ENCODE measurements at regions of chr11 and their contacts with region 1.

Region 1: GRCh38 chr11:34357701-34358257 is at the start of gene ABTB2:
- DNase-seq: peak; percentile 95 to 98 (median 96)
- ATAC-seq: peak; percentile 98
- H3K4me3 ChIP-seq: peak within 1 kb of the TSS; percentile 32
- H3K27ac ChIP-seq: 0 out of 3 replicates have a peak within 1 kb of the TSS, but pooled peaks have one; percentile 22
- H3K4me1 ChIP-seq: peaks cover 9 to 27% of the 10 kb centered on the region in 2 experiments
- H3K27me3 ChIP-seq: peaks cover 17 to 23% of the 10 kb centered on the region in 2 experiments
- CTCF ChIP-seq: no peak
- EP300 ChIP-seq: no peak
- POLR2A ChIP-seq: no peak
- RAD21 ChIP-seq: peak in 1 of 2 experiments; percentile 16; a peak in 1 of 4 replicates
- polyA plus RNA-seq, gene ABTB2: 0.03 TPM in 1 of 2 experiments, not detected in the other

Region 2: DNA sequence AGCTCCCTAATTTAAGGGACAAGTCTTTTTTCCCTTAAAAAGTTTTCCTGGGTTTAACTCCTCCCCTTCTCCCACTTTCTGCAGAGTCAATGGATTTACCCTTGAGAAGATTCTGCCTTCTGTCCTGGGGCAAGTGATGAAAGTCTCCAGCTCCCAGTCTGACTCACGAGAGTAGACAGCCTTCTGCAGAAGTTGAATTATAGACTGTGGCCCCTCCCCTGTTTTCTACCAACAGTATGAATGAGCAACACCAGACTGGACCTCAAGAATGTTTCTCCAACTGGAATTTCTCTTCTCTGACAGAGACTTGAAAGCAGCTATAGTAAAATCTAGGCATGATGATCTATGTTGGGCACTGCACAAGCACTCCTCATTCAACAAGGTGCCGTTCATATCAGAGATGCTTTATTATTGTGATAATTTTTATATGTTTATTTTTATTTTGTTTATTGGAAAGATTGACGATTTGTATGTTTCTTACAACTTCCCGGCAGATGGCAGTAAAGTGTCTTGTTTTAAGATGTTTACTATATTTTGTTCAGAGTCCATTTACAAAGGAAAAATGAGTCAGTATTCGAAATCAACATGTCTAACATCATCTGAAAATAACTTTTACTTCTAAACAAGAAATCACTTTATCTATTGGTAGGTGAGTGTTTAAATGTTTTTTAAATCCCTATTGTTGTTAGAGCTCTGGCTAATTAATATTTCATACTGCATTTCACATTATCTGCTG is 522.5 kb before region 1 on chr11:
- CTCF ChIA-PET with region 1: interaction called, 28 read pairs
- POLR2A ChIA-PET with region 1: no interaction called
- in situ Hi-C with region 1: no loop called
- intact Hi-C with region 1: no loop called
- DNase-seq: peak in 2 of 4 experiments; percentile 33 to 74
- ATAC-seq: peak; percentile 78
- H3K4me3 ChIP-seq: no peak overlapping the region
- H3K27ac ChIP-seq: no peak overlapping the region
- H3K4me1 ChIP-seq: no peaks in the 10 kb centered on the region; a peak in 1 of 5 replicates
- H3K27me3 ChIP-seq: peaks cover 10 to 25% of the 10 kb centered on the region in 2 experiments
- CTCF ChIP-seq: peak; percentile 34 to 71 (median 39); a peak in 4 of 6 replicates
- EP300 ChIP-seq: no peak
- POLR2A ChIP-seq: no peak
- RAD21 ChIP-seq: peak; percentile 68 to 88

Region 3: DNA sequence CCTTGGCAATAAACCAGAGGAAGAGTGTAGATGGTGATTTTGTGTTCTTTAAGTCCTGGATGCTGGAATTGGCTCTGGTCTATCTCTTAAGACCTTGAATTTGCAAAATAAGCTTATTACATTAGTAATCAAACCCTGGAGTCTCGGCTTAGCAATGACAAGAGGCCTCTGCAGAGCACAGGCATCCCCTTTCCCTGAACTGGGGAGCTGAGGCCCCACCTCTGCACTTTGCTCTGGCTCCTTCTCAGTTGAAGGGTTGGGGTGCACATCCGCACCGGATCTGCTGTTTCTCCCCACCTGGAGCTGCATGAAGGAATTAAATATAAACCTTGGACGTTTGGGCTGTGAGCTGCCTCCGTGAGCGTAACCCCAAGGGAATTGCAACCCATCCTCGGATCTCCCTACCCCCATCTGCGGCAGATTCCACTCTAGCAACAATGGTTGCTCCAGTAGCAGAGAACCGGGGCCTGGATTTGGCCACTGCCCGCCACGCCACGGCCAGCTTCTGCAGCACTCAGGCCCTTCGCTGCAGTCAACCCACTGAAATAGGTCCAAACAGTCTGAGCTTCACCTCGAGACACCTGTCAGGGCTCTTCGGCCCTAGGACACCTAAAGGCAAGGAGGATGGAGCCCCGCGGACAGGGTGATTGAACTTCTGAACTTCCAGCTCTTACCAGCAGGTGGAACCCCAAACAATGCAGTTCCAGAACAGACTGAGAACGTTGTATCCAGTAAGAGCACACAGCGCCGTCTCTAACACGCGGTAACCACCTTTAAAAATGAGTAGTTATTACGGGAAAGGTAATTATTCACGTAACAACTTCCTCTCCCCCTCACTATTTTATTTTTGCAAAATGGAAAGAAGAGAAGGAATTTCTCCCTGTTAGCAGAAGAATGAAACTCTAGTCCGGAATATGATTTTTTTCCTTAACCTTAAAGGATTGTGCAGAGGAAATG is 361.0 kb before region 1 on chr11:
- CTCF ChIA-PET with region 1: interaction called, 15 read pairs
- POLR2A ChIA-PET with region 1: interaction called, 3 read pairs
- in situ Hi-C with region 1: loop called (anchors 10 kb)
- intact Hi-C with region 1: loop called (anchors 1 kb)
- DNase-seq: peak; percentile 71 to 88 (median 74)
- ATAC-seq: peak; percentile 99
- H3K4me3 ChIP-seq: no peak overlapping the region
- H3K27ac ChIP-seq: no peak overlapping the region
- H3K4me1 ChIP-seq: peaks cover 3 to 8% of the 10 kb centered on the region in 2 experiments; a peak in 3 of 5 replicates
- H3K27me3 ChIP-seq: no peaks in the 10 kb centered on the region
- CTCF ChIP-seq: peak; percentile 91 to 92 (median 91)
- EP300 ChIP-seq: no peak
- POLR2A ChIP-seq: no peak
- RAD21 ChIP-seq: peak; percentile 79 to 89

Region 4: GRCh38 chr11:34208266-34209135 is 149.3 kb before region 1 on chr11:
- CTCF ChIA-PET with region 1: no interaction called
- POLR2A ChIA-PET with region 1: no interaction called
- in situ Hi-C with region 1: no loop called
- intact Hi-C with region 1: no loop called
- DNase-seq: peak; percentile 38 to 67 (median 53)
- ATAC-seq: peak; percentile 82
- H3K4me3 ChIP-seq: no peak overlapping the region
- H3K27ac ChIP-seq: no peak overlapping the region
- H3K4me1 ChIP-seq: peaks cover 0 to 9% of the 10 kb centered on the region in 2 experiments; a peak in 3 of 5 replicates
- H3K27me3 ChIP-seq: peaks cover 10 to 21% of the 10 kb centered on the region in 2 experiments
- CTCF ChIP-seq: no peak
- EP300 ChIP-seq: no peak
- POLR2A ChIP-seq: no peak
- RAD21 ChIP-seq: no peak

Region 5: GRCh38 chr11:34457607-34458006 is 99.8 kb after region 1 on chr11:
- CTCF ChIA-PET with region 1: no interaction called
- POLR2A ChIA-PET with region 1: no interaction called
- in situ Hi-C with region 1: no loop called
- intact Hi-C with region 1: no loop called
- DNase-seq: no peak
- ATAC-seq: no peak
- H3K4me3 ChIP-seq: no peak overlapping the region
- H3K27ac ChIP-seq: no peak overlapping the region
- H3K4me1 ChIP-seq: peaks cover 0 to 2% of the 10 kb centered on the region in 2 experiments; a peak in 1 of 5 replicates
- H3K27me3 ChIP-seq: no peaks in the 10 kb centered on the region
- CTCF ChIP-seq: no peak
- EP300 ChIP-seq: no peak
- POLR2A ChIP-seq: no peak
- RAD21 ChIP-seq: no peak

Region 6: DNA sequence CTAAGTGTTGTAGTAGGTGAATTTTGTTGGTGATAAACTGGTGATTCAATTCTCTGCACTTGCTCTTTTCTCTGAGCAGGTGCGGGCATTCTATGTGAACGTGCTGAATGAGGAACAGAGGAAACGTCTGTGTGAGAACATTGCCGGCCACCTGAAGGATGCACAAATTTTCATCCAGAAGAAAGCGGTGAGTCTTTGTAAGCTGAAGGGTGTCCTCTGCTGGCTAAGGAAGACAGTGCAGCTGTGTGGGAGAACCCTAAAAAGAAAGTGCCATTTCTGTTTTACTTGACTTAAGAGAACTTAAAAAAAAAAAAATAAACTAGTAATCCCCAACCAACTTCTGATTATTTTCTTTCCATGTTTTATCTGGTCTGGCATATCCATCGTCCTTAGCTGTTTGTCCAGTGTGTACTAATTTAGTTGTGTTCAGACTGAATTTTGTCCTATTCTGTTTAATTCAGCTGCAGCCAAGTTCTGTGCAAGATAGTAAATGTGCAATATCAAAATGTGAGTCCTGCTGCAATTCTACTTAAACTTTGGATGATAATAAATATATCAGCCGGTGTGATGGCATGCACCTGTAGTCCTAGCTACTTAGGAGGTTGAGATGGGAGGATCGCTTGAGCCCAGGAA is 110.5 kb after region 1 on chr11:
- CTCF ChIA-PET with region 1: interaction called, 10 read pairs
- POLR2A ChIA-PET with region 1: interaction called, 4 read pairs
- in situ Hi-C with region 1: no loop called
- intact Hi-C with region 1: loop called (anchors 2 kb)
- DNase-seq: peak; percentile 40 to 64 (median 53)
- ATAC-seq: peak; percentile 84
- H3K4me3 ChIP-seq: no peak overlapping the region
- H3K27ac ChIP-seq: no peak overlapping the region
- H3K4me1 ChIP-seq: peaks cover 0 to 5% of the 10 kb centered on the region in 2 experiments; a peak in 3 of 5 replicates
- H3K27me3 ChIP-seq: no peaks in the 10 kb centered on the region
- CTCF ChIP-seq: peak; percentile 81 to 86 (median 82)
- EP300 ChIP-seq: no peak
- POLR2A ChIP-seq: no peak
- RAD21 ChIP-seq: peak; percentile 63 to 88

Region 7: DNA sequence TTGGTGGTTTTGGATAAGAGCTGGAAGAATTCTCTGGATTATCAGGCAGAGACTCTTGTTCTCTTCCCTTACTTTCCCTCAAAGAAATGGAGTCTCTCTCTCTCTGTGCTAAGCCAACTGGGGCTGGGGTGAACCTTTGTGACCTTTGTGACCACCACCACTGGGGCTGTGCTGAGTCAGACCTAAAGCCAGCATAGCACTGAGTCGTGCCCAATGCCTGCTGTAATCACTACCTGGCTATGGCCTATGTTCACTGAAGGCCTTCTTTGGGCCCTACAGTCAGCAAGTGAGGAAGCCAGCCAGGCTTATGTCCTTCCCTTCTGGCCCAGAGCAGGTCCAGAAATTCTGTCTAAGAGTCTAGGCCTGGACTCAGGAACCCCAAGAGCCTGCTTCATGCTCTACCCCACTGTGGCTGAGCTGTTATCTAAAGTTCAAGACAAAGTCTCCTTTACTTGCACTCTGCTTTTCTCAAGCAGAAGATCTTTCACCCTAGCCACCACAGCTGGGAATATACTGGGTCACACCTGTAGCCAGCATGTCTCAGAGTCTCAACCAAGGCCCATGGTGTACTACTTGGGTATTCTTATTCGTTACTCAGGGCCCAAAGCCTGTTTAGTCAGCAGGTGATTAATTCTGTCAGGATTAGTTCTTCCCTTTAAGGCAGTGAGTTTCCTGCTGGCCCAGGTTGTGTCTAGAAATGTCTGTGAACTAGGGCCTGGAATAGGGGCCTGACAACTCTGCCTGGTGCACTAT is 349.1 kb after region 1 on chr11:
- CTCF ChIA-PET with region 1: no interaction called
- POLR2A ChIA-PET with region 1: no interaction called
- in situ Hi-C with region 1: no loop called
- intact Hi-C with region 1: no loop called
- DNase-seq: peak in 1 of 4 experiments; percentile 5
- ATAC-seq: no peak
- H3K4me3 ChIP-seq: no peak overlapping the region
- H3K27ac ChIP-seq: no peak overlapping the region
- H3K4me1 ChIP-seq: no peaks in the 10 kb centered on the region
- H3K27me3 ChIP-seq: no peaks in the 10 kb centered on the region
- CTCF ChIP-seq: no peak
- EP300 ChIP-seq: no peak
- POLR2A ChIP-seq: no peak
- RAD21 ChIP-seq: no peak

Region 8: GRCh38 chr11:34899633-34900016 is 541.8 kb after region 1 on chr11:
- CTCF ChIA-PET with region 1: interaction called, 3 read pairs
- POLR2A ChIA-PET with region 1: no interaction called
- in situ Hi-C with region 1: loop called (anchors 10 kb)
- intact Hi-C with region 1: loop called (anchors 5 kb)
- DNase-seq: no peak
- ATAC-seq: peak; percentile 16; the same call in 2 of the 3 replicates
- H3K4me3 ChIP-seq: no peak overlapping the region
- H3K27ac ChIP-seq: no peak overlapping the region
- H3K4me1 ChIP-seq: no peaks in the 10 kb centered on the region; a peak in 1 of 5 replicates
- H3K27me3 ChIP-seq: no peaks in the 10 kb centered on the region
- CTCF ChIP-seq: no peak
- EP300 ChIP-seq: no peak
- POLR2A ChIP-seq: no peak
- RAD21 ChIP-seq: no peak

Measured in K562 (cell line).